Naive thymus-derived CD8-positive, alpha-beta T cell (primary cell): ENCODE measurements at regions of chr15 and their contacts with region 1.

Region 1: GRCh38 chr15:44286814-44287452 is 1.6 kb upstream of the GOLM2 start:
- DNase-seq: peak in 3 of 10 donors; percentile 14 to 21 (median 18)
- ATAC-seq: no peak
- H3K4me3 Mint-ChIP-seq: peak overlapping the region; percentile 92 to 99 (median 96)
- H3K27ac Mint-ChIP-seq: peak overlapping the region; percentile 94 to 100 (median 98)
- H3K4me1 Mint-ChIP-seq: peaks cover 28 to 47% (median 45%) of the 10 kb centered on the region in 4 donors
- H3K27me3 Mint-ChIP-seq: peaks cover 0 to 8% (median 2%) of the 10 kb centered on the region in 5 donors

Region 2: GRCh38 chr15:44219073-44219472 is 67.9 kb before region 1 on chr15:
- POLR2A ChIA-PET with region 1: no interaction called
- DNase-seq: no peak
- ATAC-seq: no peak
- H3K4me3 Mint-ChIP-seq: no peak overlapping the region
- H3K27ac Mint-ChIP-seq: no peak overlapping the region
- H3K4me1 Mint-ChIP-seq: peaks cover 0 to 6% (median 2%) of the 10 kb centered on the region in 4 donors
- H3K27me3 Mint-ChIP-seq: peaks cover 5 to 32% (median 18%) of the 10 kb centered on the region in 5 donors

Region 3: GRCh38 chr15:44275150-44275830 is 11.6 kb before region 1 on chr15:
- POLR2A ChIA-PET with region 1: no interaction called
- DNase-seq: no peak
- ATAC-seq: no peak
- H3K4me3 Mint-ChIP-seq: no peak overlapping the region
- H3K27ac Mint-ChIP-seq: no peak overlapping the region
- H3K4me1 Mint-ChIP-seq: peaks cover 0 to 2% (median 0%) of the 10 kb centered on the region in 4 donors
- H3K27me3 Mint-ChIP-seq: peaks cover 0 to 17% (median 10%) of the 10 kb centered on the region in 5 donors

Region 4: GRCh38 chr15:44426975-44427755 is 140.2 kb after region 1 on chr15 and contains the start of gene CTDSPL2:
- POLR2A ChIA-PET with region 1: interaction called, 23 read pairs
- DNase-seq: peak; percentile 90 to 98 (median 94)
- ATAC-seq: peak; percentile 93 to 94
- H3K4me3 Mint-ChIP-seq: peak within 1 kb of the TSS; percentile 93 to 100 (median 97)
- H3K27ac Mint-ChIP-seq: peak within 1 kb of the TSS; percentile 96 to 100 (median 99)
- H3K4me1 Mint-ChIP-seq: peaks cover 25 to 55% (median 50%) of the 10 kb centered on the region in 4 donors
- H3K27me3 Mint-ChIP-seq: peaks cover 0 to 2% (median 0%) of the 10 kb centered on the region in 5 donors
- polyA plus RNA-seq, gene CTDSPL2: 29.0 to 41.8 (median 41.2) TPM

Region 5: DNA sequence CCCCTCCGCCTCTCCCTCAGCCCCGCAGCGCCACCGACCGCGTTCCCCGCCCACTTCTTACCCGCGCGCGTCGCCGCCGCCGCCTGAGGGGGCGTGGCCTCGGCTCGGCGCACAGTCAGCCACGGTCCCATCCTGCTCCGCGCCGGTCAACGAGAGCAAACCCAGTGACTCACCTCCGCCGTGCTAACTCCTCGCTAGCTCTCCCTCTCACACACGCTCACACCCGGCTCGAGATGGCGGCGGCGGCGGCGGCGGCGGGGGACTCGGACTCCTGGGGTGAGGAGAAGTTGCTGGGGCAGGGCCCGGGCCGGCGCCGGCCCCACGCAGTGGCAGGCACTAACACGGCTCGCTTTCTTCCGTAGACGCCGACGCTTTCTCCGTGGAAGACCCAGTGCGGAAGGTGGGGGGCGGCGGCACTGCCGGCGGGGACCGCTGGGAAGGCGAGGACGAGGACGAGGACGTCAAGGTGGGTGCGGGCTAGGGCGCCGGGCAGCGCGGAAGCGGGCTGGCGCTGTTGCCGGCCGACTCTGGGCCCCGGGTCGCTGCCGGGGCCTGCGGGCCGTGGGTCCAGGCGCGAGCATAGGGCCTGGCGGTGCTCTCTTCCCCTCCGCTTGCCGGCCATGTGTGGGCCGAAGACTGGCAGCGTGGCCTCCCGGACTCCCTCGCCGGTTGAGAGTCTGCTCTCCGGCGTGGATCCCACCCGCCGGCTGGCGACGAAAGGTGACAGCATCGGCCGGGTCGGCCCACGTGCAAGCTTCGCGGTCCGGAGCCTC is 250.2 kb after region 1 on chr15 and contains the start of gene EIF3J:
- POLR2A ChIA-PET with region 1: interaction called, 14 read pairs
- DNase-seq: peak; percentile 90 to 96 (median 93)
- ATAC-seq: peak; percentile 90 to 91
- H3K4me3 Mint-ChIP-seq: peak within 1 kb of the TSS; percentile 87 to 97 (median 94)
- H3K27ac Mint-ChIP-seq: peak within 1 kb of the TSS; percentile 86 to 98 (median 96)
- H3K4me1 Mint-ChIP-seq: peaks cover 22 to 68% (median 55%) of the 10 kb centered on the region in 4 donors
- H3K27me3 Mint-ChIP-seq: no peaks in the 10 kb centered on the region
- polyA plus RNA-seq, gene EIF3J: 15.3 to 18.4 (median 16.2) TPM